CD4-positive, alpha-beta T cell (primary cell): ENCODE measurements at regions of chr7 and their contacts with region 1.

Region 1: DNA sequence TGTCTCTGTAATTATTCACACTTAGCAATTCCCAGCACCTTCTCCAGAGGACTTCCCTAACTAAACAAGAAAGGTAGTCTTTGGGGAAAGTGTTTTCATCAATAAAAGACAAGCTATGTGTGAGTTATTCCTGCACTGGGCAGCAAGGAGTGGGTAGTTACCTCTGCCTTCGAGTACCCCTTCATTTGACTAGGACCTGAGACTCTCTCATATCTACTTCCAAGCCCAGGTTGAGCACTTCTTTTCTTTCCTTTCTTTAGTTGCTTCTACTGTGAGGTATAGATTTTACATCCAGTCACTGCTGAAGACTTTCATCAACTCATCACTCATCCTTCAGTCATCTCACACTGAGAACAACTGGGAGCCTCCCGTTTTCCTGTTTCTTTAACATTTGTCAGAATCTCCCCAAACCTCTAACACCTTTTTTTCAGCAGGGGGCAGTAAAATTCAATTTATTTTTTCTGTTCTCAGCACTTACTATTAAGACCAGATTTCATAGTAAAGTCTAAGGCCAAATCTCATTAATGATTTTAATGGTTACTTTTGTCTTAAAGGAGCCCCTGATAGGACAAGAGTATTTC is 80.1 kb upstream of the PRSS1 start:
- DNase-seq: peak in 3 of 14 experiments; percentile 40 to 52 (median 51)
- ATAC-seq: no peak
- H3K4me3 ChIP-seq: no peak overlapping the region
- H3K4me3 Mint-ChIP-seq: no peak overlapping the region
- H3K27ac ChIP-seq: no peak overlapping the region
- H3K27ac Mint-ChIP-seq: peak overlapping the region; percentile 84
- H3K4me1 ChIP-seq: peaks cover 9% of the 10 kb centered on the region
- H3K4me1 Mint-ChIP-seq: peaks cover 35% of the 10 kb centered on the region
- H3K27me3 ChIP-seq: no peaks in the 10 kb centered on the region
- H3K27me3 Mint-ChIP-seq: no peaks in the 10 kb centered on the region
- CTCF ChIP-seq: peak; percentile 43

Region 2: DNA sequence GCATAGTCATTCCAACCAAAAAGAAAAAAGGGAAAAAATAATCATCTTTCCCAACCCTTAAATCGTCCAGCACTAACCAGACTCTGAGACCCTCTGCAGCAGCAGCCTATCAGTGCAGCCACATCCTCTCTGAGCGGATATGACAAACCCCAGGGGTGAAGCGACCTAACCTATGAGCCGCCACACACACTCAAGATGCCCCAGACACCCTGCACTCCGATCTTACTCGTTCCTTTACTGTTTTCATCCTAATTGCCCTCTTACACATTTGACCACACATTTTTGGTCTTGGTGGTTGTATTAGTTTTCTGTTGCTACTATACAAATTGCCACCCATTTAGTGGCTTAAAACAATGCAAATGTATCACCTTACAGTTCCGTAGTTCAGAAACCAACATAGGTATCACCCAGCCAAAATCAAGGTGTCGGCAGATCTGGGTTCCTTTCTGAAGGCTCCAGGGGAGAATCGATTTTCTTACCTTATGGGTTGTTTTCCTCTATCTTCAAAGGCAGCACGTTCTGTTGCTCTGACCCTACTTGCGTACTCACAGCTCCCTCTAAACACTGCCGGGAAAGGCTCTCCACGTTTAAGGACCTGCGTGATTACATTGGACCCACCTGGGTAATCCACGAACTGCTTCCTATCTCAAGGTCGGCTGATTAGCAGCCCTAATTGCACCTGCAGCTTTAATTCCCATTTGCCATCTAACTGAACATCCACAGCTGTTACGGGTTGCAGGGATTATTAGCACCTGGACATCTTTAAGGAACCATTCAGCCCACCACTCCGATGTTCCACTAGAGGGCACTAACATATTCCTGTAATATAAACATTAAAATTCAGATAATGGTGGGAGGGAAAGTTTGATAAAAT is 42.8 kb after region 1 on chr7:
- CTCF ChIA-PET with region 1: no interaction called
- POLR2A ChIA-PET with region 1: interaction called, 4 read pairs
- intact Hi-C with region 1: loop called (anchors 5 to 10 kb)
- DNase-seq: peak in 8 of 14 experiments; percentile 9 to 66 (median 36)
- ATAC-seq: peak; percentile 56
- H3K4me3 ChIP-seq: peak overlapping the region; percentile 51
- H3K4me3 Mint-ChIP-seq: peak overlapping the region; percentile 84
- H3K27ac ChIP-seq: peak overlapping the region; percentile 40 to 53
- H3K27ac Mint-ChIP-seq: peak overlapping the region; percentile 80
- H3K4me1 ChIP-seq: peaks cover 44% of the 10 kb centered on the region
- H3K4me1 Mint-ChIP-seq: peaks cover 71% of the 10 kb centered on the region
- H3K27me3 ChIP-seq: no peaks in the 10 kb centered on the region
- H3K27me3 Mint-ChIP-seq: no peaks in the 10 kb centered on the region
- CTCF ChIP-seq: peak; percentile 52

Region 3: GRCh38 chr7:142838461-142839213 is 169.5 kb after region 1 on chr7:
- CTCF ChIA-PET with region 1: no interaction called
- POLR2A ChIA-PET with region 1: no interaction called
- intact Hi-C with region 1: loop called in 1 of 2 experiments (anchors 5 kb)
- DNase-seq: no peak
- ATAC-seq: no peak
- H3K4me3 ChIP-seq: no peak overlapping the region
- H3K4me3 Mint-ChIP-seq: no peak overlapping the region
- H3K27ac ChIP-seq: no peak overlapping the region
- H3K27ac Mint-ChIP-seq: no peak overlapping the region
- H3K4me1 ChIP-seq: no peaks in the 10 kb centered on the region
- H3K4me1 Mint-ChIP-seq: peaks cover 18% of the 10 kb centered on the region
- H3K27me3 ChIP-seq: no peaks in the 10 kb centered on the region
- H3K27me3 Mint-ChIP-seq: no peaks in the 10 kb centered on the region
- CTCF ChIP-seq: no peak

Region 4: DNA sequence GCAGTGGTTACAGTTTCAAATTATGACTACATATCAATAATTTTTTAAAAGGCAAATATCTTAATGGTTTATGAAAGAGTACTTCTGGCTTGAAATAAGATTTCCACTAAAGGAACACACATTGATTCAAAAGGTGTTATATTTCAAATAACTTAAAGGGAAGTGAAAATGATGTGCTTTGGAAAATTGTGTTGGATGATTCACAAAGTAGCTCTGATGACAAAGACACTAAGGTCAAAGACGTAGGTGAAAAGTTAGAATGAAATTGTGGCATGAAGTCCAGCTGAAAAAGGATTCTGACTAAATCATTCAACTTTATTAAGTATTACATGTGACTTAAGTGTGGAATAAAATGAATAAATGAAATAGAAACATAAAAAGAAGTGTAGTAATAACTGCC is 1358.8 kb after region 1 on chr7:
- CTCF ChIA-PET with region 1: no interaction called
- POLR2A ChIA-PET with region 1: no interaction called
- intact Hi-C with region 1: no loop called
- DNase-seq: no peak
- ATAC-seq: no peak
- H3K4me3 ChIP-seq: no peak overlapping the region
- H3K4me3 Mint-ChIP-seq: no peak overlapping the region
- H3K27ac ChIP-seq: no peak overlapping the region
- H3K27ac Mint-ChIP-seq: no peak overlapping the region
- H3K4me1 ChIP-seq: no peaks in the 10 kb centered on the region
- H3K4me1 Mint-ChIP-seq: no peaks in the 10 kb centered on the region
- H3K27me3 ChIP-seq: peaks cover 0 to 4% of the 10 kb centered on the region in 2 experiments
- H3K27me3 Mint-ChIP-seq: peaks cover 12% of the 10 kb centered on the region
- CTCF ChIP-seq: no peak